Gastrocnemius medialis (tissue), 4 donors: ENCODE measurements at regions of chr11 and their contacts with region 1.

Region 1: GRCh38 chr11:131760091-131761061 is 390.0 kb downstream of the NTM start:
- DNase-seq: no peak
- ATAC-seq: no peak
- H3K4me3 ChIP-seq: no peak overlapping the region
- H3K27ac ChIP-seq: no peak overlapping the region
- H3K4me1 ChIP-seq: no peaks in the 10 kb centered on the region
- H3K27me3 ChIP-seq: no peaks in the 10 kb centered on the region
- CTCF ChIP-seq: no peak
- POLR2A ChIP-seq: no peak

Region 2: GRCh38 chr11:131146827-131147490 is 613.4 kb before region 1 on chr11:
- in situ Hi-C with region 1: no loop called
- intact Hi-C with region 1: no loop called
- DNase-seq: no peak
- ATAC-seq: no peak
- H3K4me3 ChIP-seq: no peak overlapping the region
- H3K27ac ChIP-seq: no peak overlapping the region
- H3K4me1 ChIP-seq: no peaks in the 10 kb centered on the region
- H3K27me3 ChIP-seq: no peaks in the 10 kb centered on the region
- CTCF ChIP-seq: no peak
- POLR2A ChIP-seq: no peak

Region 3: DNA sequence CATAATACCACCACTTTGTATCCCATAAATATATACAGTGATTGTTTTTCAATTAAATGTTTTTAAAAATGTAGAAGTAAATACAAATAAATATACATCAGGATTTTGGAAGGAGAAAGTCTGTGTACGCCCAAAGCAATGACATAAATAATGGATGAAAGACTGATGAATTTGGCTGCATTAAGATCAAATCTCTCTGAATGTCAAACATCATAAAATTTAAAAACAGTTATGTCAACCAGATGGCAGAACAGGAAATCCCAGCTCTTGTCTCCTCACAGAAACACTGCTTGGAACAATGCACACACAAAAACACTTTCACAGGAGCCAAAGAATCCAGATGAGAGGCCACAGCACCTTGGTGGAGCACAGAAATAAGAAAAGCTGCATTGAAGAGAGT is 57.1 kb before region 1 on chr11:
- in situ Hi-C with region 1: loop called in 1 of 4 experiments (anchors 10 kb)
- intact Hi-C with region 1: no loop called
- DNase-seq: no peak
- ATAC-seq: no peak
- H3K4me3 ChIP-seq: no peak overlapping the region
- H3K27ac ChIP-seq: no peak overlapping the region
- H3K4me1 ChIP-seq: no peaks in the 10 kb centered on the region
- H3K27me3 ChIP-seq: no peaks in the 10 kb centered on the region
- CTCF ChIP-seq: no peak
- POLR2A ChIP-seq: no peak